Posterior vena cava (tissue), 2 donors: ENCODE measurements at regions of chr20 and their contacts with region 1.

Region 1: GRCh38 chr20:2729251-2729713 is 36.7 kb downstream of the EBF4 start:
- DNase-seq: no peak

Region 2: GRCh38 chr20:2578475-2579192 is 150.6 kb before region 1 on chr20:
- intact Hi-C with region 1: no loop called
- DNase-seq: no peak

Region 3: DNA sequence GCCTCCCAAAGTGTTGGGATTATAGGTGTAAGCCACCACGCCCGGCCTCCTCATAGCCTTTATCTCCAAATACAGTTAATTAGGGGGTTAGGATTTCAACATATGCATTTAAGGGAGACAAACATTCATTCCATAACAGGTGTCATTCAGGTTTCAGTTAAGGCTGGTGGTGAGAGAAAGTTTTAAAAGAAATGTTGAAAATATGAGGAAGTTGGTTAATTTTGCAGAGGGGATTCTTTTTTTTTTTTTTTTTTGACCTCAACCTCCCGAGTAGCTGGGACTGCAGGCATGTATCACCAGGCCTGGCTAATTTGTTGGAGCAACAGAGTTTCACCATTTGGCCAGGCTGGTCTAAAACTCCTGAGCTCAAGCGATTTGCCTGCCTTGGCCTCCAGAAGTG is 49.2 kb before region 1 on chr20:
- intact Hi-C with region 1: loop called in 1 of 2 experiments (anchors 1 kb)
- DNase-seq: no peak

Region 4: GRCh38 chr20:2746636-2747265 is 17.5 kb after region 1 on chr20:
- intact Hi-C with region 1: loop called in 1 of 2 experiments (anchors 1 kb)
- DNase-seq: no peak

Region 5: GRCh38 chr20:3670511-3670910 is 941.2 kb after region 1 on chr20:
- intact Hi-C with region 1: no loop called
- DNase-seq: no peak